GM12878 (cell line): ENCODE measurements at regions of chr21 and their contacts with region 1.

Region 1: GRCh38 chr21:42593007-42593806 is 60.2 kb upstream of the PDE9A start:
- DNase-seq: no peak
- ATAC-seq: peak; percentile 95
- H3K4me3 ChIP-seq: no peak overlapping the region
- H3K27ac ChIP-seq: no peak overlapping the region
- H3K4me1 ChIP-seq: no peaks in the 10 kb centered on the region
- H3K27me3 ChIP-seq: no peaks in the 10 kb centered on the region
- CTCF ChIP-seq: peak; percentile 63 to 84 (median 78)
- EP300 ChIP-seq: no peak
- POLR2A ChIP-seq: no peak
- RAD21 ChIP-seq: peak; percentile 90

Region 2: GRCh38 chr21:42674351-42674940 is 81.2 kb after region 1 on chr21:
- CTCF ChIA-PET with region 1: no interaction called
- POLR2A ChIA-PET with region 1: no interaction called
- RAD21 ChIA-PET with region 1: no interaction called
- SMC1A ChIA-PET with region 1: no interaction called
- in situ Hi-C with region 1: no loop called
- intact Hi-C with region 1: no loop called
- DNase-seq: no peak
- ATAC-seq: no peak
- H3K4me3 ChIP-seq: no peak overlapping the region
- H3K27ac ChIP-seq: no peak overlapping the region
- H3K4me1 ChIP-seq: no peaks in the 10 kb centered on the region
- H3K27me3 ChIP-seq: peaks cover 0 to 6% of the 10 kb centered on the region in 2 experiments; a peak in 2 of 4 replicates
- CTCF ChIP-seq: no peak
- EP300 ChIP-seq: no peak
- POLR2A ChIP-seq: no peak
- RAD21 ChIP-seq: no peak

Region 3: DNA sequence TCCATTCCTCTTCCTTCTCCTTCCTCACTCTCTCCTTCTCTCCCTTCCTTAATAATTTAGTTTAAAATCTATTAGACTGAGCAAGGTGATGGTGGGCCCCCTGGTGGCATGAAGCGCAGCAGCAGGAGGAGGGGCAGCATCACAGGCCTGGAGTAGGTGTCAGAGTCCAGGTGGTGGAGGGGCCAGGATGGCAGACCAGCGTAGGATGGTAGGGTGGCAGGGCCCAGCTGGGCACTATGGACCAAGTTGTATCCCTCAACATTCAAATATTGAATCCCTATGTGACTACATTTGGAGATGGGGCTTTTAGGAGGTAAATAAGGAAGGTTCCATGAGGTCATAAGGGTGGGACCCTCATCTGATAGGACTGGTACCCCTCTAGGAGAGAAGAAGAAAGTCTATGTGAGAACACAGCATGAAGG is 225.1 kb after region 1 on chr21:
- CTCF ChIA-PET with region 1: interaction called, 13 read pairs
- POLR2A ChIA-PET with region 1: no interaction called
- RAD21 ChIA-PET with region 1: interaction called, 4 read pairs
- SMC1A ChIA-PET with region 1: interaction called, 4 read pairs
- in situ Hi-C with region 1: no loop called
- intact Hi-C with region 1: loop called (anchors 1 kb)
- DNase-seq: no peak
- ATAC-seq: peak; percentile 91
- H3K4me3 ChIP-seq: no peak overlapping the region
- H3K27ac ChIP-seq: no peak overlapping the region
- H3K4me1 ChIP-seq: no peaks in the 10 kb centered on the region; the same call in 1 of the 2 replicates
- H3K27me3 ChIP-seq: no peaks in the 10 kb centered on the region
- CTCF ChIP-seq: peak; percentile 39 to 82 (median 66)
- EP300 ChIP-seq: no peak
- POLR2A ChIP-seq: no peak
- RAD21 ChIP-seq: peak; percentile 72

Region 4: GRCh38 chr21:42833439-42833815 is 240.2 kb after region 1 on chr21:
- CTCF ChIA-PET with region 1: interaction called, 5 read pairs
- POLR2A ChIA-PET with region 1: no interaction called
- RAD21 ChIA-PET with region 1: interaction called, 3 read pairs
- SMC1A ChIA-PET with region 1: interaction called, 4 read pairs
- in situ Hi-C with region 1: loop called (anchors 5 kb)
- intact Hi-C with region 1: loop called (anchors 1 kb)
- DNase-seq: peak; percentile 20
- ATAC-seq: peak; percentile 86
- H3K4me3 ChIP-seq: no peak overlapping the region
- H3K27ac ChIP-seq: no peak overlapping the region
- H3K4me1 ChIP-seq: peaks cover 3% of the 10 kb centered on the region
- H3K27me3 ChIP-seq: no peaks in the 10 kb centered on the region
- CTCF ChIP-seq: peak; percentile 51 to 63 (median 55)
- EP300 ChIP-seq: no peak
- POLR2A ChIP-seq: no peak
- RAD21 ChIP-seq: peak; percentile 43